ENCODE measurements at regions of chr9 and their contacts with region 1.

Region 1: DNA sequence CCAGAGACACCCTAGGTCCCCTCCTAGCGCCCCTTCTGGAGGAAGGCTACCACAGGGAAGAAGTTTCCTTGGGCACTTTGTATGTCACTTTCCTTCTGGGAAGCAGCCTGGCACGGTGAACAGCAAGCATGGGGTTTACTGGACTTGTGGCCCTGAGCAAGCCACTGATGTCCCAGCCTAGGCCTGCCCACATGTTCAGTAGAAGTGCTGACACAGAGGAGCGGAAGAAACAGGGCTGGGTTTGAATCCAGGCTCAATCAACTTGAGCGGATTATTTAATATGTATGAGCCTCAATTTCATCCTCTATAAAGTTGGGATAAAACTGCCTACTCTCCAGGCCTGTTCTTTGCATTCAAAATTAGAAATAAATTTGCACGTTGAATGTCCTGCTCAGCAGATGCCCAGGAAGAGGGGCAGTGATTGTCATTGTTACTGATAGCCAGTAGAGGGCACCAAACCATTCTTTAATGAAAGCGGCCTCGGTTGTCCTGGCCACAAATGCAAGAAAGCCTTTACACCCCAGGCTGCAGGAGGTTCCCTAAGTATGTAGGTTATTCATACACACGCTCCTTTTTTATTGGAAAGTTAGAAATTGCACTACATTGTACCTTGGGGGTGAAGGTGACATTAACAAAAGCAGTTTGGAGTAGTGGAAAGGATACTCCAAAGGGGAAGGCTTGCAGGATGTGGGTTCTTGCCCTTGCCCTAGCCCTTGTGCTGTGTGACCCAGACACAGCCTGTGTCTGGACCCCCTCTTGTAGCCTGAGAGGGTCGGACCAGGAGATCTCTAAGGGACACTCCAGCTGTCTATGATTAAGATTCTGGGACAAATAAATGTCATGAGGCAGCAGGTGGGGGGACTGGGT is 13.4 kb upstream of the XPA start:
- DNase-seq: peak; percentile 66
- ATAC-seq: peak; percentile 96
- H3K4me3 ChIP-seq: no peak overlapping the region
- H3K27ac ChIP-seq: no peak overlapping the region
- H3K4me1 ChIP-seq: no peaks in the 10 kb centered on the region; the same call in 1 of the 2 replicates
- H3K27me3 ChIP-seq: peaks cover 12% of the 10 kb centered on the region
- CTCF ChIP-seq: peak; percentile 86
- POLR2A ChIP-seq: no peak
- RAD21 ChIP-seq: peak; percentile 89

Region 2: DNA sequence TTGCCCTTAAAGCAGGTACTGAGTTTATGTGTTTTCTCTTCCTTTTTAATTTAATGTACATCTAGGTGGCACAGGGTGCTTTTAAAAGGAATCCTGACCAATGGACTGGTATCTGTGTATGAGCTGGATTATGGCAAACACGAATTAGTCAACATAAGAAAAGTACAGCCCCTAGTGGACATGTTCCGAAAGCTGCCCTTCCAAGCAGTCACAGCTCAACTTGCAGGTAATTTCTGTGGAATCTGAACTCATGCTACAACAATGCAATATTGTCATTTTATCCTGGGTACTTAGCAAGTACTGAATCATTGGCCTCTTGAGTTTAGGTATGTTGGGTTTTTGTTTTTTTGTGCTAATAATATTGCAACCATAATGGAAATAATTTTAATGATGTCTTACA is 223.5 kb before region 1 on chr9:
- CTCF ChIA-PET with region 1: no interaction called
- POLR2A ChIA-PET with region 1: no interaction called
- dilution Hi-C with region 1: no loop called
- in situ Hi-C with region 1: no loop called
- intact Hi-C with region 1: no loop called
- DNase-seq: peak; percentile 41
- ATAC-seq: no peak
- H3K4me3 ChIP-seq: no peak overlapping the region
- H3K27ac ChIP-seq: no peak overlapping the region
- H3K4me1 ChIP-seq: peaks cover 8% of the 10 kb centered on the region
- H3K27me3 ChIP-seq: no peaks in the 10 kb centered on the region
- CTCF ChIP-seq: peak; percentile 27; the same call in 1 of the 2 replicates
- POLR2A ChIP-seq: no peak
- RAD21 ChIP-seq: no peak

Region 3: DNA sequence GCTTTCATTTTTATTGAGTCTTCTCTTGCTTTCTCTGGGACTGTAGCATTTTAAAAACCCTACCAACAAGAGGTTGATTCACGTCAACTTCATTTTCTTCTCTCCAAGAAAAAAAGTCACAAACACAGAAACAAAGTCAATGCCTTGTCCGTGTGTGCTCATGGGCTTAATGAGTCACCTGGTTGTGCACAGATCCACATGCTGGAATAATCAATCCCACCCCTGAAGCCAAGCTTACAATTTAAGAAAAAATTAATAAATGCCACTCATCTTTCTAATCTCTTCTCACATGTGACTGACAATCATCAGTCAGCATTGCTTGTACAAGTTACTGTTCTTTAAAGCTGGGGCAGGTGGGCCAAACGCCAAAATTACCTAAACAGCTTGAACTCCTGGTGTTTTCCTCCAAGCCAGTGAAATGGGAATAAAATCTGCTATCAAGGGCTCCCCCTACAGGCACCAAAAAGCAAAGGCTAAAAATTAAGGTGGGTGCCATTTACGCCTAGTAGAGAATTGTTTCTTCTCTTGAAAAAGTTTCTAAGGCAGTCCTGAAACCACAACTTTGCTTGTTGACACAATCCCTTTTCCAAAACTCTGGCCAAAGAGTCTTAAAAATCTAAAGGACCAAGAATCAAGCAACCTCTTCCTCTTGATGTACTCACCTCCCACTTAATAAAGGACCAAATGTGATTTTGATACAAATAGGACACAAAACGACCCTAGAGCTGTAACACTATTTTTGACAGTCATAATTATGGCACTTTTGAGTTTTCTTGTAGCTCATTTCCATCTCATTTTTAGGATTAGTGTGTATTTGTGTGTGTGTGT is 190.4 kb after region 1 on chr9:
- CTCF ChIA-PET with region 1: interaction called, 7 read pairs
- POLR2A ChIA-PET with region 1: no interaction called
- dilution Hi-C with region 1: no loop called
- in situ Hi-C with region 1: loop called (anchors 5 kb)
- intact Hi-C with region 1: loop called (anchors 1 kb)
- DNase-seq: peak; percentile 55
- ATAC-seq: peak; percentile 74
- H3K4me3 ChIP-seq: no peak overlapping the region
- H3K27ac ChIP-seq: no peak overlapping the region
- H3K4me1 ChIP-seq: no peaks in the 10 kb centered on the region
- H3K27me3 ChIP-seq: no peaks in the 10 kb centered on the region
- CTCF ChIP-seq: peak; percentile 72
- POLR2A ChIP-seq: no peak
- RAD21 ChIP-seq: peak; percentile 74